ENCODE measurements at regions of chr14 and their contacts with region 1.

Region 1: DNA sequence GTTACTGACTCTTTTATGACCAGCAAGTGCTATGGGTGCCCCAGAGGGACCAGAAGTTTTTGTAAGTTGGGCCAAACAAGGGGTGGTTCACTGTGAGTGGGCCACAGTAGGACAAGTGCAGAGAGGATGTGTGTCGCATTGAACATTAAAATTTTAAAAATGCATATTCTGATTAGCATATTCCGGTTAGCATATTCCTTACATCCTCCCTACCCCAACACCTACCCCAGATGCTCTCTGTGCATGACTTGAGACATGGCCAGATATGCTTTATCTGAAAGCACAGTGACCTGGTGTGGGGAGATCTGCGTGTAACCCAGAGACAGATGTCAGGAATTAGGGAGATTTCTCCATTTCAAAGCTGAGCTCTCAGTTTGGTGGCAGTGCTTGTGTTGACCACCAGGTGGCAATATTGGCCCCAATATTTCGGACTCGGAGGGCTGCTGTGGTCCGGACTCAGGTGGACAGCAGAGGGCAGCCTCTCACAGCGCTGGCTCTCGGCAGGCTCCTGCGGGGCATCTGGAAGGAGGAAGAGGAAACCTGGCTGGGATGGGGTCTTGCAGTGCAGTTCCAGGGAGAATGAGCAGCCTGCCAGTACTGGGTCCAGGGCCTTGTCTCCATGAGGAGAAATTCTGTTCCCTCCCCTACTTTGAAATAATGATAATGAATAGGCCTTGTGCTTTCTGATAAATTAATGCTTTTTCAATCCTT is 1.6 kb upstream of the CEBPE start:
- DNase-seq: peak; percentile 87 to 94 (median 88)
- ATAC-seq: peak; percentile 92
- H3K4me3 ChIP-seq: no peak overlapping the region
- H3K27ac ChIP-seq: no peak overlapping the region
- H3K4me1 ChIP-seq: peaks cover 51 to 58% of the 10 kb centered on the region in 2 experiments
- H3K27me3 ChIP-seq: no peaks in the 10 kb centered on the region
- CTCF ChIP-seq: peak; percentile 100
- EP300 ChIP-seq: peak; percentile 71
- POLR2A ChIP-seq: no peak
- RAD21 ChIP-seq: peak; percentile 100

Region 2: GRCh38 chr14:23068476-23069412 is 52.0 kb before region 1 on chr14:
- CTCF ChIA-PET with region 1: interaction called, 11 read pairs
- POLR2A ChIA-PET with region 1: interaction called, 6 read pairs
- in situ Hi-C with region 1: no loop called
- intact Hi-C with region 1: no loop called
- DNase-seq: peak; percentile 77 to 91 (median 82)
- ATAC-seq: peak; percentile 80
- H3K4me3 ChIP-seq: no peak overlapping the region
- H3K27ac ChIP-seq: peak overlapping the region; percentile 17; the same call in 1 of the 3 replicates
- H3K4me1 ChIP-seq: peaks cover 20 to 26% of the 10 kb centered on the region in 2 experiments
- H3K27me3 ChIP-seq: no peaks in the 10 kb centered on the region
- CTCF ChIP-seq: peak; percentile 99 to 100 (median 100)
- EP300 ChIP-seq: no peak
- POLR2A ChIP-seq: no peak
- RAD21 ChIP-seq: peak; percentile 84 to 91

Region 3: GRCh38 chr14:23167116-23167847 is 46.6 kb after region 1 on chr14:
- CTCF ChIA-PET with region 1: no interaction called
- POLR2A ChIA-PET with region 1: no interaction called
- in situ Hi-C with region 1: no loop called
- intact Hi-C with region 1: loop called (anchors 5 kb)
- DNase-seq: peak in 2 of 4 experiments; percentile 25 to 51
- ATAC-seq: peak; percentile 24
- H3K4me3 ChIP-seq: no peak overlapping the region
- H3K27ac ChIP-seq: no peak overlapping the region
- H3K4me1 ChIP-seq: peaks cover 34 to 39% of the 10 kb centered on the region in 2 experiments
- H3K27me3 ChIP-seq: no peaks in the 10 kb centered on the region
- CTCF ChIP-seq: no peak
- EP300 ChIP-seq: no peak
- POLR2A ChIP-seq: no peak
- RAD21 ChIP-seq: no peak

Region 4: DNA sequence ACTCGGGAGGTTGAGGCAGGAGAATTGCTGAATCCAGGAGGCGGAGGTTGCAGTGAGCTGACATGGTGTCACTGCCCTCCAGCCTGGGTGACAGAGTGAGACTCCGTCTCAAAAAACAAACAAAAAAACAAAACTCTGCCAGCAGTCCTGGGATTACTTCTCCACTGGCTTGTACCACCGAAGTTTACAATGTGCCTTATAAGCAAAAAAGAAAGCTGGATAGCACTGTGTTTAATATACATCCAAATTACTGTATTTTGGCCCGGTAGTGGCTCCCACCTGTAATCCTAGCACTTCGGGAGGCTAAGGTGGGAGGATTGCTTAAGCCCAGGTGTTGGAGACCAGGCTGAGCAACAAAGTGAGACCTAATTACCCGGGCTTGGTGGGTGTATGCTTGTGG is 148.5 kb after region 1 on chr14:
- CTCF ChIA-PET with region 1: interaction called, 11 read pairs
- POLR2A ChIA-PET with region 1: no interaction called
- in situ Hi-C with region 1: no loop called
- intact Hi-C with region 1: no loop called
- DNase-seq: no peak
- ATAC-seq: no peak
- H3K4me3 ChIP-seq: no peak overlapping the region
- H3K27ac ChIP-seq: no peak overlapping the region
- H3K4me1 ChIP-seq: peaks cover 2 to 3% of the 10 kb centered on the region in 2 experiments; a peak in 2 of 5 replicates
- H3K27me3 ChIP-seq: no peaks in the 10 kb centered on the region
- CTCF ChIP-seq: no peak
- EP300 ChIP-seq: no peak
- POLR2A ChIP-seq: no peak
- RAD21 ChIP-seq: no peak

Region 5: DNA sequence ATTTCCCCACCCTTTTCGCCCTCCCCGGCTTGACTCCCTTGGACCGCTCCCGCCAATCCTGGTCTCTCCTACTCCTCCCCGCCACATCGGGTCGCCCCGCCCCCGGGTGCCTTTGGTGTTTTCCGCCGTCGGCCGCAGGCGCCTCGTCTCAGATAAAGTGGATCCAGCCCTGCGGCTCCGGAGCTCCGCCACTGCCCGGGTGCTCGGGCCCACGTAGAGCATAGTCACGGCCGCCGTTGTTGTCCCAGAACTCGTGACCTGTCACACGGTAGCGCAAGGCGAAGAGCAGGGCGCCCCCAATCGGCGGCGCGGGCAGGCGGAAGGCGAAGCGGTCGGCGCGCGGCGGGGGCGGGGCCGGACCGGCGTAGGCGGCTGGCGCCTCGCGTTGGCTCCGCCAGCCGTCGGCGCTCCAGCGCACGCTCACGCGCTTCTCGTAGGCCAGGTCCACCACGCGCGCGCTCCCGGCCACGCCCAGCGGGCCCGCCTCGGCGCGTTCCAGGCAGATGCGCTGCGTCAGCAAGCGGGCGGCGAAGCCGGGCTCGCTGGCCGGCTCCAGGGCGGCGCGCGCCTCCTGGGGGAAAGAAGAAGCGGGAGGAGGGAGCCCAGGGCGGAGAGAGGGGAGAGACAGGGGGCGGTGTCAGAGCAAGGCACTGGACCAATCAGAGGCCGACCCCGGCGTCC is 180.7 kb after region 1 on chr14:
- CTCF ChIA-PET with region 1: interaction called, 57 read pairs
- POLR2A ChIA-PET with region 1: no interaction called
- in situ Hi-C with region 1: no loop called
- intact Hi-C with region 1: loop called (anchors 5 kb)
- DNase-seq: peak; percentile 94 to 99 (median 96)
- ATAC-seq: peak; percentile 90
- H3K4me3 ChIP-seq: peak overlapping the region; percentile 67
- H3K27ac ChIP-seq: peak overlapping the region; percentile 95
- H3K4me1 ChIP-seq: peaks cover 22 to 28% of the 10 kb centered on the region in 2 experiments
- H3K27me3 ChIP-seq: no peaks in the 10 kb centered on the region
- CTCF ChIP-seq: peak; percentile 65 to 76 (median 66)
- EP300 ChIP-seq: peak; percentile 81
- POLR2A ChIP-seq: no peak
- RAD21 ChIP-seq: peak; percentile 45 to 50

Region 6: DNA sequence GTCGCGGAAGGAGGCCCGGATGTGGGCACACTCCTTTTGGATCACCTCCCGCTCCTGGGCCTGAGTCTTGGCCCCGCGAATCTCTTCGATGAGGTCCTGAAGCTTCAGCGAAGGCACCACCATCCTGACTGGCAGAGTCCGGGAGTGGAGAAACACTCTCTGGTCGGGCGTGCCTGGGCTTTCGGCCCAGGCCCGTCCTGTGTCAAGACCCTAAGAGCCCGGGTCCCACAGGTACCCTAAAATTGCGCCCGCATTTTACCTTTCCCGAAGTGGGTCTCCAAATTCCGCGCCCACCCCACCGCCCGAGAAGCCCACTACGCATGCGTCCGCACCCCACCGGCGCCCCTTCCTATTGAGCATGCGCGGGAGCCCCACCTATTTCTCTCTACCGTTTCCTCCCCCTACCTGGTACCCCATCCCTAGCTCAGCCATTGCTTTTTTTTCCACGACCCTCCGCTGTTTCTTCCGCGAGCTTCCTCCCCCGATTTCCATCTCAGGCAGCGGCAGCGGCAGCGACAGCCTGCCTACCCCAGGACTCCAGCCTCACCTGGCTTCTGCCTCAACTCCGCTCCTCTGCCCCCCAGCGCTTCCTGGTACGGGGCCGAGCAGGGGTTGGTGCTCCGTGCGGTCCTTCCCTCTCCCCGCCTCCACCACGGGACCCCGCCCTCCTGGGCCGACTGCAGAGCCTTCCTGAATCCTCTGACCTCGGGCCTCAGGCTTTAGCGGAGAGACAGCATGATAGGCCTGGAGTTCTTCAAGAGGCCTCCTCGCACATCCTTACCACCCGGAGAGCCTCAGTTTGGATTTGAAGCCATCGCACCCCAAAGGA is 446.7 kb after region 1 on chr14 and contains the start of gene AP1G2:
- CTCF ChIA-PET with region 1: interaction called, 8 read pairs
- POLR2A ChIA-PET with region 1: no interaction called
- in situ Hi-C with region 1: no loop called
- intact Hi-C with region 1: loop called (anchors 5 kb)
- DNase-seq: peak; percentile 89 to 93 (median 90)
- ATAC-seq: peak; percentile 97
- H3K4me3 ChIP-seq: peak within 1 kb of the TSS; percentile 71
- H3K27ac ChIP-seq: peak within 1 kb of the TSS; percentile 48
- H3K4me1 ChIP-seq: peaks cover 12 to 36% of the 10 kb centered on the region in 2 experiments; a peak in 4 of 5 replicates
- H3K27me3 ChIP-seq: no peaks in the 10 kb centered on the region
- CTCF ChIP-seq: no peak
- EP300 ChIP-seq: no peak
- POLR2A ChIP-seq: peak; percentile 87
- RAD21 ChIP-seq: no peak
- polyA plus RNA-seq, gene AP1G2: 22.9 to 33.3 TPM

Region 7: DNA sequence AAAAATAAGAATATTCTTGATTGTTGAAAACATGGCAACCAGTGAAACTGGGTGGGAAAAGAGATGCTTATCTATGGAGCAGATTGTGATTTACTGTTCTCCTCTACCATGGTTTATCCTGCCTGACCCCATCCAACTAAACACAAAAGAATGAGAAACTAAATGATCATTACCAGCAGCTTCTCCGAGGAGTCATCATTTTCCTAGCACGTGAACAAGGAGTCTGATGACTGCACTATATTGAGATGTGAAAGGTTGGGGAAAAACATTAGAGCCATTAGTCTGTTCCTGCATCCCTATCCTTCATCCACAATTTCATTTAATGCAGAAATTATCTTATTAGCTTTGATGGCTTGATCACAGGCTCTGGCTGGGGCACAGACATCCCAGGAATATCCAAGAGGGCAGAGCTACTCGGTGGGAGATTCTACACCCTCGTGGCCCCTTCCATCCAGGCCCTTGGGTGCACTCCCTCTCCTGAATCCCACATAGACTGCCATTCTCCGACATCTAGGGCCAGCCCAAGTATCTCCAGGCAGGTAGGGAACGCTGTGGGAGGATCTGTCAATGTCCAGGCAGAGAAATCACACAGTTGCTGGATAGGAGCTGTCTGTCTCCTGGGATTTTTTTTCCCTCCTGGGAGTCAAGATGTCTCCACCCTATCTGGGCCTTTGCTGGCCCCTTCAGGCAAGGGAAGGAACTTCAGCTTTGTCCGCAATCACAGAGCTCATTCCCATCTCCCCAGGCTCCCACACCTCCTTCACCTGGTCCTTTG is 789.6 kb after region 1 on chr14:
- CTCF ChIA-PET with region 1: no interaction called
- POLR2A ChIA-PET with region 1: no interaction called
- in situ Hi-C with region 1: no loop called
- intact Hi-C with region 1: no loop called
- DNase-seq: peak; percentile 46 to 61 (median 56)
- ATAC-seq: peak; percentile 89
- H3K4me3 ChIP-seq: no peak overlapping the region
- H3K27ac ChIP-seq: no peak overlapping the region
- H3K4me1 ChIP-seq: no peaks in the 10 kb centered on the region
- H3K27me3 ChIP-seq: no peaks in the 10 kb centered on the region
- CTCF ChIP-seq: peak; percentile 63 to 77 (median 73)
- EP300 ChIP-seq: no peak
- POLR2A ChIP-seq: no peak
- RAD21 ChIP-seq: peak; percentile 56 to 75

Measured in K562 (cell line).